B cell (primary cell): ENCODE measurements at regions of chr6 and their contacts with region 1.

Region 1: GRCh38 chr6:15621203-15622044 is 41.4 kb downstream of the DTNBP1 start:
- DNase-seq: peak; percentile 32
- ATAC-seq: peak; percentile 51
- H3K4me3 ChIP-seq: no peak overlapping the region
- H3K4me3 Mint-ChIP-seq: no peak overlapping the region
- H3K27ac ChIP-seq: peak overlapping the region in 1 of 2 donors; percentile 44
- H3K27ac Mint-ChIP-seq: peak overlapping the region; percentile 75
- H3K4me1 ChIP-seq: peaks cover 7 to 11% of the 10 kb centered on the region in 2 donors
- H3K4me1 Mint-ChIP-seq: peaks cover 36% of the 10 kb centered on the region
- H3K27me3 ChIP-seq: no peaks in the 10 kb centered on the region
- H3K27me3 Mint-ChIP-seq: no peaks in the 10 kb centered on the region
- CTCF ChIP-seq: no peak

Region 2: DNA sequence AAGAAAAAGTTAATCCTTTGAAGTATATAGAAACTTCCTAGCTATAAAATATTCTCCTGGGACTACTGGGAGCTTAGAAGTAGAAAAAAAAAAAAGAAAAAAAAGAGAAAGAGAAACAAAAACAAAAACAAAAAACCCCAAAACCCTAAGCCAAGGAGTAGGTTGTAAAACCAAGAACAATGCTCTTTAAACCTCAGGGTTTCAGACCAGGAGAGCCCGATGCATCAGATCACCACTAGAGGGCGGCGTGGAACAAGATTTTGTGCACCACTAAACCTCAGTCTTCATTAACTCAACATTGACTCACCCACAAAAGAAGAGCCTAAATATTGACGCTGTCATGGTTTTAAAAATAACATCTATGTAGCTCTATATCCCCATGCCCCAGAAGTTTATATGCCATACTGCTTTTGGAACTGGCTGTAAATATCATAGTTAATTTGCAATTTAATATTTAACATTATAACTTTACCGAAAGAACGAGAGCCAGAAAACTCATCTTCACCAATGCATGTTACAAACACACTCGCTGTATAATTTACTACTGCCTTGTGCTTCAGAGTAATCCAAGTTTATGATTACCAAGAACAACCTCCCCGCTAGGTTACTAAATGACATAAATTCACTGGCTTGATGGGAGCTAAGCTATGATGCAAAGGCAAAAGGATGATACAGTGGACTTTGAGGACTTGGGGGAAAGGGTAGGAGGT is 1826.2 kb before region 1 on chr6:
- CTCF ChIA-PET with region 1: interaction called, 14 read pairs
- POLR2A ChIA-PET with region 1: no interaction called
- intact Hi-C with region 1: no loop called
- DNase-seq: peak; percentile 81
- ATAC-seq: peak; percentile 91
- H3K4me3 ChIP-seq: no peak overlapping the region
- H3K4me3 Mint-ChIP-seq: no peak overlapping the region
- H3K27ac ChIP-seq: no peak overlapping the region
- H3K27ac Mint-ChIP-seq: no peak overlapping the region
- H3K4me1 ChIP-seq: no peaks in the 10 kb centered on the region
- H3K4me1 Mint-ChIP-seq: peaks cover 2% of the 10 kb centered on the region
- H3K27me3 ChIP-seq: no peaks in the 10 kb centered on the region
- H3K27me3 Mint-ChIP-seq: no peaks in the 10 kb centered on the region
- CTCF ChIP-seq: peak; percentile 93

Region 3: DNA sequence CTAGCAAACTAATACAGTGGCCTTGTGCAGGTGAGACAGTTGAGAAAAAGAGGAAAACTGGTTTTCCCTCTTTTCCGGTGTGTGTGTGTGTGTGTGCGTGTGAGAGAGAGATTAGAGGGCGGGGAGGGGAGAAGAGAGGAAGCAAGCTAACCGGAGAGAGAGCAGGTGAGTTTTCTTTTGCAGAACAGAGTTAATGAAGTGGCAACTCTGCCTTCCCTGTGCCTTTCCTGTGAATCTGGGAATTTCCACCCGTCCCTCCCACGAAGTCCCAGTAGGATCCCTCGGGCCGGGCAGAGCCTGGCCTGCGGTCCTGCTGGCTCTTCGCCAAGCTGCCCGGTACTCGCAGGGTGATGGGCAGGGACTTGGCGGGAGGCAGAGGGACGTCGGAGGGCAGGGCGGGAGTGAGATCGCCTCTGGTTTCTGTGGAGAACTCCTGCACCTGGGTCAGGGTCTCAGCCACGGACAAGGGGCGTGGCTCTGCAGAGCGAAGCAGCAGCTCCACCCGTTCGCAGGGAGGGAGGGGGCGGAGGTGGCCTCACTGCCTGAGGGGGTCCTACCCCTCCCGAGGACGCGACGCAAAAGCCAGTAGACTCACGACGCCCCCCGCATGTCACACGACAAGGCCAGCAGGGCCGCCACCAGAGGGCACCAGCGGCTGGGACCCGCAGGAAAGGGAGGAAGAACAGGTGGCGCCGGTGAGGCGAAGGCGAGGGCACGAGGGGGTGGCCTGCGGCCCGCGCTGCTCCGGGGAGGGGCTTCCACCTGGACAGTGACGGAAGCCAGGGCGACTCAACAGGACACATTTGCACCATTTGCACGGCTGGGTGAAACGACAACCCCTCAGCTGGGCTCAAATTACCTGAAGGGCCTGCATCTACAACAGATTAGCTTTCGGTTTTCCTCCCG is 1747.9 kb before region 1 on chr6:
- CTCF ChIA-PET with region 1: interaction called, 11 read pairs
- POLR2A ChIA-PET with region 1: no interaction called
- intact Hi-C with region 1: no loop called
- DNase-seq: peak; percentile 83
- ATAC-seq: peak; percentile 94
- H3K4me3 ChIP-seq: peak overlapping the region; percentile 23 to 66 (median 55)
- H3K4me3 Mint-ChIP-seq: peak overlapping the region; percentile 89
- H3K27ac ChIP-seq: no peak overlapping the region
- H3K27ac Mint-ChIP-seq: peak overlapping the region; percentile 15
- H3K4me1 ChIP-seq: peaks cover 15 to 20% of the 10 kb centered on the region in 2 donors
- H3K4me1 Mint-ChIP-seq: peaks cover 19% of the 10 kb centered on the region
- H3K27me3 ChIP-seq: peaks cover 0 to 4% (median 0%) of the 10 kb centered on the region in 4 experiments
- H3K27me3 Mint-ChIP-seq: no peaks in the 10 kb centered on the region
- CTCF ChIP-seq: peak; percentile 87

Region 4: DNA sequence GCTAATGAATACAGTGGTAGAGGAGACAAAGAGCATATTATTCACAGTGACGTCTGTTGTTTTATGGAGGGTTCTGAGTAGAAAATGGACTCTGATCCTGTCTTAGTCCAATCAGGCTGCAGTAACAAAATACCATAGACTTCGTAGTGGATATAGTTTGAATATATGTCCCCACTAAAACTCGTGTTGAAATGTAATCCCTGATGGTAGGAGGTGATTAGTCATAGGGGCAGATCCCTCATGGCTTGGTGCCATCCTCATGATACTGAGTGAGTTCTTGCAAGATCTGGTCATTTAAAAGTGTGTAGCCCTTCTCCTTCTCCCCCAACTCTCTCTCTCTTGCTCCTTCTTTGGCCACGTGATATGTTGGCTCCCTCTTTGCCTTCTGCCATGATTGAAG is 1421.4 kb before region 1 on chr6:
- CTCF ChIA-PET with region 1: no interaction called
- POLR2A ChIA-PET with region 1: no interaction called
- intact Hi-C with region 1: loop called (anchors 10 kb)
- DNase-seq: no peak
- ATAC-seq: no peak
- H3K4me3 ChIP-seq: no peak overlapping the region
- H3K4me3 Mint-ChIP-seq: no peak overlapping the region
- H3K27ac ChIP-seq: no peak overlapping the region
- H3K27ac Mint-ChIP-seq: no peak overlapping the region
- H3K4me1 ChIP-seq: no peaks in the 10 kb centered on the region
- H3K4me1 Mint-ChIP-seq: no peaks in the 10 kb centered on the region
- H3K27me3 ChIP-seq: no peaks in the 10 kb centered on the region
- H3K27me3 Mint-ChIP-seq: no peaks in the 10 kb centered on the region
- CTCF ChIP-seq: no peak

Region 5: DNA sequence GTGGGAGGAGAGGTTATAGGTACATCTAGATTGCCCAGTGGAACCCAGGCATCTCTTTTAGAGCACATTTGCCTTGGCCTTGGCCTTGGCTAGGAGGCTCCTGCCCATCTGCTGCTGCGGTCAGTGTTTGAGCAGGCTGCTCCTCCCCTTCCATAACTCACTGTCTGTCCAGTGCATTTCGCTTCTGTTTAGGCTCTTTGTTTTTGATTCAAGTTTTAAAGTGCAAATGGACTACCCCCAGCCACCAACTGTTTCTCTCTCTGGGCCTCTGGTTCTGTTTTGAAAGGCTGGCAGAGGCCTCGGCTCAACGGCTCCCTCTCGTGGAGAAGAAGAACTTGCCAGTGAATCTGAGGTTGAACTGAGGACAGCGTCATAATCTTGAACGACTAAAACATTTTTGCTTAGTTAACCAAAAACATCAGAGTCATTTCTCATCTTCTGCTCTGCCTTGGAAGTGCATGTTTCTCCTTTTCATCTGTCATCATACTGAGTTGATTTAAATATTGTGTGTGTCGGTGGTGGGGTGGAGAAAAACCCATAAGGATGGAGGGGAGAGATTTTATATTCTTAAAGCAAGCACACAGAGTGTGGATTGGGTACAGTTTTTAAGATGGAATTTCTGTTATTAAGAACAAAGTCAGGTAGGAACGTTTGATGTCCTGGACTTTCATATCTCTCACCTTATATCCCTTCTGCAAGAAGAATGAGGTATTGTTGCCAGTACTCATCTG is 130.0 kb before region 1 on chr6:
- CTCF ChIA-PET with region 1: interaction called, 11 read pairs
- POLR2A ChIA-PET with region 1: no interaction called
- intact Hi-C with region 1: loop called (anchors 1 kb)
- DNase-seq: peak; percentile 77
- ATAC-seq: peak; percentile 77
- H3K4me3 ChIP-seq: no peak overlapping the region
- H3K4me3 Mint-ChIP-seq: no peak overlapping the region
- H3K27ac ChIP-seq: no peak overlapping the region
- H3K27ac Mint-ChIP-seq: peak overlapping the region; percentile 51
- H3K4me1 ChIP-seq: peaks cover 15 to 18% of the 10 kb centered on the region in 2 donors
- H3K4me1 Mint-ChIP-seq: peaks cover 33% of the 10 kb centered on the region
- H3K27me3 ChIP-seq: no peaks in the 10 kb centered on the region
- H3K27me3 Mint-ChIP-seq: no peaks in the 10 kb centered on the region
- CTCF ChIP-seq: peak; percentile 93

Region 6: GRCh38 chr6:15662326-15663129 is 41.1 kb after region 1 on chr6 and contains the start of gene DTNBP1:
- CTCF ChIA-PET with region 1: interaction called, 8 read pairs
- POLR2A ChIA-PET with region 1: no interaction called
- intact Hi-C with region 1: loop called (anchors 5 kb)
- DNase-seq: peak; percentile 95
- ATAC-seq: peak; percentile 73
- H3K4me3 ChIP-seq: peak within 1 kb of the TSS; percentile 50 to 97 (median 78)
- H3K4me3 Mint-ChIP-seq: peak within 1 kb of the TSS; percentile 94
- H3K27ac ChIP-seq: peak within 1 kb of the TSS; percentile 91 to 97
- H3K27ac Mint-ChIP-seq: peak within 1 kb of the TSS; percentile 95
- H3K4me1 ChIP-seq: peaks cover 36 to 49% of the 10 kb centered on the region in 2 donors
- H3K4me1 Mint-ChIP-seq: peaks cover 51% of the 10 kb centered on the region
- H3K27me3 ChIP-seq: no peaks in the 10 kb centered on the region
- H3K27me3 Mint-ChIP-seq: no peaks in the 10 kb centered on the region
- CTCF ChIP-seq: no peak
- total RNA-seq, gene DTNBP1: 73.0 and 73.6 TPM in 2 replicates